ENCODE measurements at regions of chr10 and their contacts with region 1.

Region 1: DNA sequence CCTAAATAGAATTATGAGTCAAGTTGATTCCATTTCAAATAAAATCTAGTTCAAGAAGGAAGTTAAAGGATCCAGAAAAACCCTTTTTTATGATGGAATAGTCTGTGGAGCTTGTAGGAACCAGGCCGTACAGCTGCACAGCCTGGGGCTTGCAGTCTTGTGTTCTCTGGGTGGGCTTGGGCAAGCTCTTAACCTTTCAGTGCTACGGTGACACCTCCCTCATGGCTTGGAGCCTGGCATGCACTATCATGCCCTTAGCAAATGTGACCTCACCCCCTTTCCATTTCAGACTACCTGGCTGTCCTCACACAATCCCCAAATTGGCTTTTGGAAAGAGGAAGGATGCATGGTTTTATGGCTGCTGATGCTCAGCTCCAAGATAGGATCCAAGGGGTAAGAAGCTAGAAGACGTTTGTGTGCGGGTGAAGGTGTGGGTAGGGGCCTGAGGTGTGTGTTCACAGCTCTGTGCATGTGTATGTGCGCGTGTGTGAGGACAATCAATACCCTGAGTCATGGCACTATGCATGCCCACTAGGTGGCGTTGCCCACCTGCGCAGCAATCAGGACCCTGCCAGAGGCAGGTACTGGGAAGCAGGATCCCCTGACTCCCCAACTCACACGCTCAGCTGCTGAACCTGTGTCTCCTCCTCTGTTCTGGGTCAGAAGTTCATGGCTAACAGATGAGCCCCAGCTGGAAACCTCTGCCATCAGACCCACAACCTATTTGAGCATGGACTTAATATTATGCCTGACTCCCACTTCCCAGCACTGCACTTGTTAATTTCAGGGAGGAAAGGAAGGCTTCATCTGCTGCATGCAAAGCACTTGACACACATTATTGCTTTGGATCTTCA is 113.4 kb downstream of the PTPN20 start:
- DNase-seq: peak; percentile 79
- ATAC-seq: peak; percentile 96
- H3K4me3 Mint-ChIP-seq: no peak overlapping the region
- H3K27ac Mint-ChIP-seq: no peak overlapping the region
- H3K4me1 Mint-ChIP-seq: no peaks in the 10 kb centered on the region
- H3K27me3 Mint-ChIP-seq: no peaks in the 10 kb centered on the region
- CTCF ChIP-seq: peak; percentile 63

Region 2: DNA sequence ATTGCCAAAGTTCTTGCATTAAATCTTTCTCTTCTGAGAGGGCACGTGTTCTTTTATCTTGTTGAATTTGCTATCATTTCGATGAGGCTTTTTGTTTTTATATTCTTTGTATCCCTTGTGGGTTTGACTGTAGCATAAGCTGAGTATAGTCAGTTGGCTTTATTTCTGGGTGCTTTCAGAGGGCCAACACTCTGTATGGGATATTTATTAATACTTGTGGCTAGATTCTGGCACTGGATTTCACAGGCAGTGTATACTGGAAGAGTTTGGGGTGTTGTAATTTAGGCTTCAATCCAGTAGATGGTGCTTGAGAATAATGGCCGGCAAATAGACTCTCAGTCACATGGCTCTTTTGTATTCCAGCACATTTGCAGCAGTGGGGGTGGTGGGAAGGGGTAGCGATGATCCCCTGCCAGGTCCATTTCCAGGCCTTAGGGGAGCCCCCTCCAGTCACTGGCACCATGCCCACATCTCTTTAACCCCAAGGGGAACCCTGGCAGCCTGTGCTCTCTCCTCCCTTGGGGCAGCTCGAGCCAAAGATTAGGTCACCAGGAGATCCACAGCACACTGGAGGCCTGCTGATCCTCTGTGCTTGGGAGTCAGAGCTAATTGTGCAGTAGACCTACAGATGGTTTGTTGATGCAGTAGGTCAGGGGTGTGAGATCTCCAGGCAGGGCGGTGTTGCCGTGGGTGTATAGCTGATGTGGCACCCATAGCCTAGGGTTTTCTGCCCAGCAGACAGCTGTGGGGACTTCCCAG is 31.6 kb before region 1 on chr10:
- CTCF ChIA-PET with region 1: interaction called, 32 read pairs
- POLR2A ChIA-PET with region 1: no interaction called
- DNase-seq: no peak
- ATAC-seq: peak; percentile 93
- H3K4me3 Mint-ChIP-seq: no peak overlapping the region
- H3K27ac Mint-ChIP-seq: no peak overlapping the region
- H3K4me1 Mint-ChIP-seq: peaks cover 23% of the 10 kb centered on the region
- H3K27me3 Mint-ChIP-seq: no peaks in the 10 kb centered on the region
- CTCF ChIP-seq: no peak

Region 3: GRCh38 chr10:47013507-47014154 is 11.0 kb before region 1 on chr10:
- CTCF ChIA-PET with region 1: interaction called, 14 read pairs
- POLR2A ChIA-PET with region 1: no interaction called
- DNase-seq: peak; percentile 53
- ATAC-seq: peak; percentile 92
- H3K4me3 Mint-ChIP-seq: no peak overlapping the region
- H3K27ac Mint-ChIP-seq: no peak overlapping the region
- H3K4me1 Mint-ChIP-seq: no peaks in the 10 kb centered on the region
- H3K27me3 Mint-ChIP-seq: no peaks in the 10 kb centered on the region
- CTCF ChIP-seq: no peak

Region 4: GRCh38 chr10:47073967-47074366 is 49.3 kb after region 1 on chr10:
- CTCF ChIA-PET with region 1: interaction called, 10 read pairs
- POLR2A ChIA-PET with region 1: no interaction called
- DNase-seq: no peak
- ATAC-seq: no peak
- H3K4me3 Mint-ChIP-seq: no peak overlapping the region
- H3K27ac Mint-ChIP-seq: no peak overlapping the region
- H3K4me1 Mint-ChIP-seq: no peaks in the 10 kb centered on the region
- H3K27me3 Mint-ChIP-seq: no peaks in the 10 kb centered on the region
- CTCF ChIP-seq: no peak

Region 5: GRCh38 chr10:47311932-47312662 is 287.5 kb after region 1 on chr10:
- CTCF ChIA-PET with region 1: interaction called, 37 read pairs
- POLR2A ChIA-PET with region 1: no interaction called
- DNase-seq: peak; percentile 89
- ATAC-seq: peak; percentile 87
- H3K4me3 Mint-ChIP-seq: no peak overlapping the region
- H3K27ac Mint-ChIP-seq: no peak overlapping the region
- H3K4me1 Mint-ChIP-seq: peaks cover 25% of the 10 kb centered on the region
- H3K27me3 Mint-ChIP-seq: no peaks in the 10 kb centered on the region
- CTCF ChIP-seq: peak; percentile 62; the same call in 1 of the 2 replicates

Region 6: DNA sequence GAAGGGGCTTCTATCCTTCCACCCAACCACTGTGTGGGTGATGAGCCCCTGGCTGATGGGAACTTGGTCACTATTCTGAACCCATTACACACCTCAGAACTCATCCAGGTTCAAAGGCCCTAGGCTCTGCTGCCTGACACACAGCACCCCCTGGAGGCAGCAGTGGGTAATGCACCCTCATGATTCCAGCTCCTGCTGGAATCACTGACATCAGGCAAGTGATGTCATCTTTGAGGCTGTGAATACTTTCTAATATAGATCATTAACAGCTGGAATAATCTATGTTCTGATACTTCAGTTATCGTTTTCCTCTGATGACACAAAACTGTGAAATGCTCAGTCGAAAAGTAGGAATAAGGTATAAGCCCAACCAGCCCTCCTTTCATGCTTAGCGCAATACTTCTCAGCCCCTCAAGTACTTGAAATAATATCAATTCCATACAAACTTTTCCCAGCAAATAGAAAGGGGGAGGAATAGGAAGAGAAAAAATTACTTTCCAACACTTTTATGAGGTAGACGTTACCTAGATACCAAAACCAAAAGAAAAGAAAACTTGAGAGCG is 316.1 kb after region 1 on chr10:
- CTCF ChIA-PET with region 1: interaction called, 13 read pairs
- POLR2A ChIA-PET with region 1: no interaction called
- DNase-seq: peak; percentile 86
- ATAC-seq: peak; percentile 83
- H3K4me3 Mint-ChIP-seq: no peak overlapping the region
- H3K27ac Mint-ChIP-seq: no peak overlapping the region
- H3K4me1 Mint-ChIP-seq: peaks cover 21% of the 10 kb centered on the region
- H3K27me3 Mint-ChIP-seq: no peaks in the 10 kb centered on the region
- CTCF ChIP-seq: peak; percentile 97